Uterus (tissue), 4 donors: ENCODE measurements at regions of chr3 and their contacts with region 1.

Region 1: GRCh38 chr3:126394575-126395228 is at the start of gene CFAP100:
- DNase-seq: no peak
- H3K4me3 ChIP-seq: no peak within 1 kb of the TSS
- H3K27ac ChIP-seq: no peak within 1 kb of the TSS
- H3K4me1 ChIP-seq: no peaks in the 10 kb centered on the region
- H3K27me3 ChIP-seq: no peaks in the 10 kb centered on the region
- CTCF ChIP-seq: no peak
- POLR2A ChIP-seq: peak in 1 of 2 donors; percentile 4
- total RNA-seq, gene CFAP100: 0.98 to 2.8 TPM in 2 of 4 donors, not detected in the others

Region 2: GRCh38 chr3:126134219-126134975 is 260.3 kb before region 1 on chr3:
- intact Hi-C with region 1: loop called (anchors 5 kb)
- DNase-seq: peak; percentile 70 to 74
- H3K4me3 ChIP-seq: no peak overlapping the region
- H3K27ac ChIP-seq: no peak overlapping the region
- H3K4me1 ChIP-seq: no peaks in the 10 kb centered on the region
- H3K27me3 ChIP-seq: no peaks in the 10 kb centered on the region
- CTCF ChIP-seq: peak; percentile 82 to 93 (median 84)
- POLR2A ChIP-seq: no peak

Region 3: DNA sequence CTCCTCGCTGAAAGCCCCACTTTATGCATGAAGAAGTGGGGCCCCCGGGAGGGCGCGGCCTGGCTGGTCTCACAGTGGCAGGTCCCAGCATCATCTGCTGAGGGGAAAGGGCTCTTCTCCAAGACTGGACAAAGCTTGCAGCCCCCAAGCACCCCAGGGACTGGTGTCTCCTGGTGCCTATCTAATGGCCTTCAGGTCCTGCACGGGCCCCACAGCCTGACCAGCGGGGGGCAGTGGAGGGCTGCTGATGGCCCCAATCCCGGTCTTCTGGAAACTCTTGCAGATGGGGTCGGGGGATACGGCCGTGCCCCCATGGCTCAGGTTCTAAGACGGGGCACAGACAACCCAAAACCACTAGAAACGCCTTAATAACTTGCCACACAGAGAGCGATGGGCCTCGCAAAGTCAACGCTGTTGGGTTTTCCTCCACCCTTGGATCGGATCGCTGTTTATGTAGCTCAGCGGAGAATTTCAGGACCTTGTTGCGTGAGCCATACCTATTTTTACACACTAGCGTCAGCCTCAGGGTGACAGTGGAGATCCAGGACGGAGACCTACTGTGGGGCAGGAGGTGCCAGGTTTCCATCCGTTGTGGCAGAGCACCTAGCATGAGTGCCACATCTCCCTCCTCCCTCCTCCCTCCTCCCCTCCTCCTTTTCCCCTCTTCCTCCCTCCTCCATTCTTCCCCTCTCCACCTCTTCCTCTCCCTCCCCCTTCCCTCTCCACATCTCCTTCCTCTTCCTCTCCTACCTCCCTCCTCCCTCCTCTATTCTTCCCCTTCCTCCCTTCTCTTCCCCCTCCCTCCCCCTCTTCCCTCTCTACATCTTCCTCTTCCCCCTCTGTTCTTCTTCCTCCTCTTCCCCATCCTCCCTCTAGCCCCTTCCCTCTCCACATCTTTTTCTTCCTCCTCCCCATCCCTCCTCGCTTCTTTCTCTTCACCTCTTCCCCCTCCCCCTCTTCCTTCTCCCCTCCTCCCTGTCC is 135.0 kb before region 1 on chr3:
- intact Hi-C with region 1: loop called (anchors 5 kb)
- DNase-seq: peak; percentile 58 to 60
- H3K4me3 ChIP-seq: no peak overlapping the region
- H3K27ac ChIP-seq: no peak overlapping the region
- H3K4me1 ChIP-seq: no peaks in the 10 kb centered on the region
- H3K27me3 ChIP-seq: no peaks in the 10 kb centered on the region
- CTCF ChIP-seq: peak; percentile 57 to 72 (median 62)
- POLR2A ChIP-seq: no peak

Region 4: DNA sequence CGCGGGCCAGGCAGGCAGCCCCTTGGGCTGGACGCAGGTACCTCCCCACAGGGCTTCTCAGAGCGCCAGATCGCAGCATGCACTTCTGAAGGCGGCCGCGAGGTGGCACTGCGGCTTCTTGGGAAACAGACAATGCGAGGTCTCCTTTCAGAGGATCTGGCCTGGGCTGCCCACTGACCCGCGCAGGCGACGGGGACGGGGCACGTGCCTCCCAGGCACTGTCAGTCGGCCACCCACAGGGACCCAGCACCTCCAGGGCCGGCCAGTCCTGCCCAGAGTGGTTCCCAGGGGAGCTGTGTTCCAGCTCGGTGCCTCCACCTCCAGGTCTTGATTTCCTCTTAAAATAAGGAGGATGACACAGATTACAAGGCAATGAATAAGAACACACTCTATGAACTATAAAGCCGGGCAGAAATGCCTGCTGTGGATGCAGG is 284.6 kb after region 1 on chr3:
- intact Hi-C with region 1: no loop called
- DNase-seq: peak; percentile 73 to 83
- H3K4me3 ChIP-seq: no peak overlapping the region
- H3K27ac ChIP-seq: no peak overlapping the region
- H3K4me1 ChIP-seq: no peaks in the 10 kb centered on the region
- H3K27me3 ChIP-seq: no peaks in the 10 kb centered on the region
- CTCF ChIP-seq: peak; percentile 86 to 95 (median 91)
- POLR2A ChIP-seq: no peak